Activated naive CD4-positive, alpha-beta T cell treated with anti-CD3 and anti-CD28 coated beads for 36 hours (primary cell): ENCODE measurements at regions of chr1 and their contacts with region 1.

Region 1: DNA sequence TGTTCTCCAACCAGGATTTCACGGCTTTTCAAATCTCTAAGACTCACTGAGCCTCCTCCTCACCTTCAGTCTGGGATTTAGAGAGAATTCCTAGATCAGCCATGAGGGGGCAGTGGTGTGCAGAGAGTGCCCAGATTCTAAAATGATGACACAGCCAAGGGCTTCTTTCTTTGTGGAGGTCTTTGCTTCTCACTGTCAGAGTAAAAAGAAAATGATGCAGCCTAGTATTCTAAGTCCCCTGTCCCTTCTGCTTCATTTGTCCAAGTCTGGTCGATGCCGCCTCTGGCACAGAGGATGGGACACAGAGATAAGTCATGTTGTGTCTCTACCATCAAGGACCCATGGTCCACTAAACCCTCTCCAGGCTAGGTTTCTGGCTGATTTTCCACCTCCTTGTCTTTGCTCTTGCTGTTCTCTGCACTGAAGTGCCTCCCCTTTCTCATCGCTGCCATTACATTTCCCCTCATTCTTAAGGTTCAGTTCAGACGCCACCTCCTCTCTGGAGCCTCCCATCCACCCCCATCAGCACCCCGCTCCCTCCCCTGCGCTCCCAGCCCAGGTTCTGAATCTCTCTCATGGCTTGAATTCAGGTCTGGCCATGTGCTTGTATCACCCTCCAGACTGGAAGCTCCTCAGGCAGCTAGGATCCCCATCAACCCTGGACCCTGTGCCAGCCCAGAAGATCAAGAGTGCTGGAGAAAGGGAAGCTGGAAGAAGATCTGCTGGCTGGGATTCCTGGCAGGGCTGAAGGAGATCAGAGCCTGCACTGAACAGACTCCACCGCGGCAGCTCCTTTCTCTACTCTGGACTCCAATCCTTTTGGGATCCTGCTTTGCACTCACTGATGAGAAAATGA is 12.0 kb upstream of the TINAGL1 start:
- DNase-seq: peak; percentile 68
- H3K4me3 Mint-ChIP-seq: no peak overlapping the region
- H3K27ac Mint-ChIP-seq: no peak overlapping the region
- H3K4me1 Mint-ChIP-seq: no peaks in the 10 kb centered on the region
- H3K27me3 Mint-ChIP-seq: peaks cover 15% of the 10 kb centered on the region

Region 2: GRCh38 chr1:31593770-31594632 is 29.6 kb after region 1 on chr1:
- CTCF ChIA-PET with region 1: interaction called, 7 read pairs
- intact Hi-C with region 1: loop called (anchors 1 kb)
- DNase-seq: peak; percentile 83
- H3K4me3 Mint-ChIP-seq: no peak overlapping the region
- H3K27ac Mint-ChIP-seq: no peak overlapping the region
- H3K4me1 Mint-ChIP-seq: no peaks in the 10 kb centered on the region
- H3K27me3 Mint-ChIP-seq: peaks cover 10% of the 10 kb centered on the region

Region 3: DNA sequence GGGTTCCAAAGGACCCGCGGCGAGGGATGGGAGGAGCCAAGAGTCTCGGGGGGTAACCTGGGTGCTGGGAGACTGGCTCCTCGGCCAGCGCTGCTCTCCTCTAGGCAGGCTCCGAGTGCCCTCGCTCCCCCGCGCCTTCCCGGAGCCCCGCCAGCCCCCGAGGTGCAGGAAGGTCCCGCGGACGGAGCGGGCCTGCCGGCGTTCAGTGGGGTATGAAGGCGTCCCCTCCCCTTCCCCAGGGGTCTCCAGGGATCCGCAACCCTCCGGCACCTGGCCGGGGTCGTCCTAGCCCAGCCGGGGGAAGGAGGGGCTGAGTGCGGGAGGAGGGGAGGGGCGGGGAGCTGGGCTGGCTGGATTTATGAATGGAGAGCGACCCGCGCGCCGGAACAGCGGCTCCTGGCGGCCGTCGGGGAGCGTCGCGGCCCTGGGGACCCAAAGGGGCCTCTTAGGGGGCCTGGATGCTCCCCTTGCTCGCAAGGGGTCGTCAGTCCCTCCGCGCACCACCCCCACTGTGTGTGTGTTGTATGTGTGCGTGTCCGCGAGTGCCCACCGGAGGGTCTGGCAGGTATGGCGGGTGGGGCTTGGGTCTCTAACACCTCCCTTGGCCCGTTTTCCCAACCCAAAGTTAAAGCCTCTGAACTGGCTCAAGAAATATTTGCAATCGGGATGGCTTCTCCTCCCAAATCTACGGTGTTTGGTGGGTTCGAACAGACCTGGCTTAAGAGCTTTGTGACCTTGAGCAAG is 53.7 kb after region 1 on chr1:
- CTCF ChIA-PET with region 1: interaction called, 8 read pairs
- intact Hi-C with region 1: loop called (anchors 1 kb)
- DNase-seq: peak; percentile 50
- H3K4me3 Mint-ChIP-seq: no peak overlapping the region
- H3K27ac Mint-ChIP-seq: no peak overlapping the region
- H3K4me1 Mint-ChIP-seq: peaks cover 2% of the 10 kb centered on the region
- H3K27me3 Mint-ChIP-seq: peaks cover 32% of the 10 kb centered on the region

Region 4: DNA sequence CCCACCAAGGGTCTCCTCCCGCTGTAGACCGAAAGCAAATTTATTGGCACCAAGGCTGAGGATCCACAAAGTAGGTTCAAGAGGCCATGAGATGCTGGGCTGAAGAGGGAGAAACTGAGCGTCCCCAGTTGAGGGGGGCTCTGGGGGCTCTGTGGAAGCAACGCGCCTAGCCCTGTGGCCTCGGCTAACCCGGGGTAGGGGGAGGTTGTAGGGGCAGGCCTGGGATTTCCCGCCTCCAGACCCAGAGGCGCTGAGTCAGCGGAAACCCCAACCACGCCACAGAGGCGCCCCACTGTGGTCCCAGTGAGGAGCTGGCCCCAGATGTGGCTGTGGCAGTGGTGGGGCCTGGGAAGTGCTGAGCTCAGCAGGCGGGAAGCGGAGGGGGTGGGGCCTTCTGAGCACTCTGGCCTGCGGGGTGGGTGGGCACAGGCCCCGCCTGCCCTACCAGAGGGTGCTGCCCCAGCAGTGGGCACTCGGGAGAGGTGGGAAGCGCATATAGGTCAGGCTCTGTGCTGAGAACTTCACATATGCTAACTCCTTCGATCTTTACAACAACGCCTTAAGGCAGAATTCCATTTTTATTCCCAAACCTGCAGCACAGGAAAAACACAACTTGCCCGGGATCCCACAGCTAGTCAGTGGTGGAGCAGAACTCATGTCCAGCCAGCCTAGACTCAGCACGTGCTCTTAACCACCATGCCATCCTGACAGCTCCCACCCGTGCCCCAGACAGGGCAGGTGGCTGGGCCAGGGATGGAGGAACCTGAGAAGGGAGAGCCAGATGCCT is 140.9 kb after region 1 on chr1:
- CTCF ChIA-PET with region 1: interaction called, 3 read pairs
- intact Hi-C with region 1: loop called (anchors 1 kb)
- DNase-seq: peak; percentile 87
- H3K4me3 Mint-ChIP-seq: peak overlapping the region; percentile 16
- H3K27ac Mint-ChIP-seq: no peak overlapping the region
- H3K4me1 Mint-ChIP-seq: peaks cover 28% of the 10 kb centered on the region
- H3K27me3 Mint-ChIP-seq: peaks cover 37% of the 10 kb centered on the region